ENCODE measurements at regions of chr2 and their contacts with region 1.

Region 1: DNA sequence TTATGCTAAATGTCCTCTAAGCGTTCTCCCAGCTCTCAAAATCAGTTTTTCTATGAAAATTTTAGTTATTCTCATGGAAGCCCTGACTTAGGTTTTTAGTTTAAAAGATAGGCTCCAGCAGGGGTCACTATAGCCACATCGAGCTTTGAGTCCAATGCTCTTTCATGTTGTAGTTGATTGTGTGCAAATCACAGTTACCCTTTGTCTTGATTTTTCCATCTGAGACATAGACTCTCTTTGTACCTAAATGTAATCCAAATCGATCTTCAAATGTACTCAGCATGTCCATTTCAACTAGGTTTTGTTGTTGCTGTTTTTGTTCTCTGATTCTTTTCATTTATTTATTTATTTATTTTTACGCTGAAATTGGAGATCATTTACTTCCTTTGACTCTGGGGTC is 26.4 kb upstream of the MSTN start:
- DNase-seq: peak in 7 of 9 donors; percentile 23 to 65 (median 54)
- ATAC-seq: peak; percentile 64
- H3K4me3 ChIP-seq: no peak overlapping the region
- H3K4me3 Mint-ChIP-seq: no peak overlapping the region
- H3K27ac ChIP-seq: no peak overlapping the region
- H3K27ac Mint-ChIP-seq: no peak overlapping the region
- H3K4me1 ChIP-seq: no peaks in the 10 kb centered on the region
- H3K4me1 Mint-ChIP-seq: no peaks in the 10 kb centered on the region
- H3K27me3 ChIP-seq: no peaks in the 10 kb centered on the region
- H3K27me3 Mint-ChIP-seq: peaks cover 0 to 4% (median 0%) of the 10 kb centered on the region in 5 donors

Region 2: DNA sequence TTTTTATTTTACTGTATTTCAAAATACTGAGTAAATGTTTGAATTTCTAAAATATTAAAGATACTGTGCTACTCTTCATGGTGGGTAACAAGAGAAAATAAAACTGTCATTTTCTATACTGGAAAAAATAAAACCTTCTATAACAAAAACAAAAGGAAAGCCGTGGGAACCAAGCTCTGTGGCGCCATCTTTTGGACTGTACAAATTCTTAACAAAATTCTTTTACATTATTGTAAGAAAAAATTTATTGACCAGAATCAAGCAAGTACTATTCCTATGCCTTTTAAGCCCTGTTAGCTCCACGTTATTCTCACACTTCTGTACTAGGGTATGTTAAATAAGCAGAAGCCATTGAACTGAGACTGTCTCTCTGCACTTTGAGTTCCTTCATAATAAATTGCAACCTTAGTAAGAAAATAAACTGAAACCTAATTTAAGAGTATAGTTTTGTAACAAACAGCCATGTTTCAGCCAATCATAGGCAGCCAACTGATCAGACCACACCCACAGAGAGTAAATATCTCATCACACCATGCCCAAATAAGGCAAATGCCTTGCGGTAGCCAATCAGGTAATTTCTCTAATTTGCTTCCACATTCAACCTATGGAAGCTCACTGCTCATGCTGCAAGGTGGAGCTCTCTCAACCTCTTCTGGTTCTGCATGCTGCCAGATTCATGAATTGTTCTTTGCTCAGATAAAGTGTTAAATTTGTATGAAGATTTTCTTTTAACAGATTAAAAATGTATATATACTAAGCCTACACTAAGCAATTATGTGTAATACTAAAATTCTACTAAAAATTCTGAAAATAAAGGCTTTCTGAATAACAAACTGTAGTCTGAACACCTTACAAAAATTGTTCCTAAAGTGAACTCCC is 188.6 kb after region 1 on chr2:
- CTCF ChIA-PET with region 1: no interaction called
- POLR2A ChIA-PET with region 1: no interaction called
- intact Hi-C with region 1: loop called (anchors 1 kb)
- DNase-seq: peak in 4 of 9 donors; percentile 5 to 18 (median 7)
- ATAC-seq: peak; percentile 45
- H3K4me3 ChIP-seq: no peak overlapping the region
- H3K4me3 Mint-ChIP-seq: no peak overlapping the region
- H3K27ac ChIP-seq: no peak overlapping the region
- H3K27ac Mint-ChIP-seq: no peak overlapping the region
- H3K4me1 ChIP-seq: no peaks in the 10 kb centered on the region
- H3K4me1 Mint-ChIP-seq: peaks cover 0 to 10% (median 0%) of the 10 kb centered on the region in 7 donors
- H3K27me3 ChIP-seq: no peaks in the 10 kb centered on the region
- H3K27me3 Mint-ChIP-seq: no peaks in the 10 kb centered on the region

Region 3: DNA sequence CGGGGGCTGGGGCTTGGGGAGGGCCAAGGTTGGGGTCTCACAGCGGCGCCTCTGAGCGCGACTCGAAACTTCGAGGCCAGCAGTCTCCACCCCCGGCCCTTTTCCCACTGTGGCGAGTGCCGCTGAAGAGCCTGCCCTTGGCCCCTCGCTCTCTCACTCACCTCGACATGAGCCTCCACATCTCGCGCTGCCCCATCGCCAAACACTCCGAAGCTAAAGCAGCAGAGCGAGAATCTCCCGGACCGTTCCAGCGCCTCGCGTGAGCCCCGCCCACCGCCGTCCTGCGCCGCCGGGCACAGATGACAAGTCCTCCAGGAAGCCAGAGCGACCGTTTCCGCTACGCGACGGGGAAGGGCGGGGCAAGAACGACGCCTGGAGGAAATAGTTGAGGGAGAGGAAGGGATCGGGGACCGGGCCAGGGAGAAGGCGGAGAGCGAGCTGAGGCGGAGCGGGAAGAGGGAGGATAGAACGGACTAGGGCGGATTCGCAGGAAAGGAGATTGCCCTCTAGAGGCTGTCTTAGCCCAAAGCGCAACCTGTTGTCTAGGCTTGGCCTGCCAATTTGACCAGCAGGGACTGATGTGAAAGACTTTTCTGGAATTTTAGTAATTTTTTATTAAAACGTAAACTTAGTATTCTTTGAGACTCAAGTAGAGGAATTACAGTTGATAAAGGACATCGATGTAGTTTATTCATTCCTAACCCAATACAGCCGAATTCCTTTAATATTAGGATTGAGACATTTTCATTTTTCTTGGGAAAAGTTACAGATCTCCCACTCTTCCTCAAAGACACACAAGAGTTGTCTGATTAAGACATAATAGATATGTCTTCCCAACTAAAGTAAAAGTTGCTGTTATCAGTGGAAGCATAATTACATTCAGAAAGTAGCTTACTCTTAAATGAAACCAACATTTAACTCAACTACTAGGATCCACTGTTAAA is 230.9 kb after region 1 on chr2 and contains the start of gene HIBCH:
- CTCF ChIA-PET with region 1: no interaction called
- POLR2A ChIA-PET with region 1: no interaction called
- intact Hi-C with region 1: loop called in 1 of 2 experiments (anchors 1 kb)
- DNase-seq: peak; percentile 56 to 88 (median 68)
- ATAC-seq: peak; percentile 94
- H3K4me3 ChIP-seq: peak within 1 kb of the TSS; percentile 83
- H3K4me3 Mint-ChIP-seq: peak within 1 kb of the TSS; percentile 85 to 100 (median 97)
- H3K27ac ChIP-seq: peak within 1 kb of the TSS; percentile 82
- H3K27ac Mint-ChIP-seq: peak within 1 kb of the TSS; percentile 91 to 99 (median 95)
- H3K4me1 ChIP-seq: peaks cover 8 to 13% of the 10 kb centered on the region in 2 donors
- H3K4me1 Mint-ChIP-seq: peaks cover 27 to 54% (median 48%) of the 10 kb centered on the region in 7 donors
- H3K27me3 ChIP-seq: no peaks in the 10 kb centered on the region
- H3K27me3 Mint-ChIP-seq: no peaks in the 10 kb centered on the region
- total RNA-seq, gene HIBCH: 11.3 to 25.0 (median 21.6) TPM

Region 4: DNA sequence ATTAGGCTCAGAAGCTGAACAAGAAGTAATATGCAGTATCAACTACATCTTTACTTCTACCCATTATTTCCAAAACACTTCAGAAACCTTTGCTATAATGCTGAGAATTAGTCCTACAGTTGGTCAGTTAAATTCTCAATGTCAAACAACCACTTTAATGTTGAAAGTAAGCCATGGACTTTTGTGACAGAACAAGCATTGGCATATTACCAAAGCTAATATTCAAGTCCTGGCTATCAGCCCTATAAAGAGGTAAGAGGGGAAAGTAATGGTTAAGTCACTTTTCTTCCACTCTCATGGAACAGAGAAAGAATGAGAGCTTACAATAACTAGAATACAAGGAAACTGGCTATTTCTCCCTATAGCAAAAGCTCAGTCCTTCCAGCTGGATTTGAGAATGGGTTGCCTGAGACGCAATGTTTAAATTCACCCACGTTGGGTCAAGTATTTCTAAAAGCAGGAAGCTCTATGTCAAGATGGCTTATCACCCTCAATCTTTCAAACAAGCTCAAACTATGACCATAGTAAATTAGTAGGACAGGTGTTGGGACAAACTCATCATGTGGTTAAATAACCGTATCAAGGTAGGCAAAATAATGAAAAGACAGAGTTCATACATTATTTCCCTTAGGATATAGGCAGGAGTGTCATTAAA is 287.8 kb after region 1 on chr2:
- CTCF ChIA-PET with region 1: interaction called, 3 read pairs
- POLR2A ChIA-PET with region 1: no interaction called
- intact Hi-C with region 1: loop called (anchors 1 kb)
- DNase-seq: no peak
- ATAC-seq: no peak
- H3K4me3 ChIP-seq: no peak overlapping the region
- H3K4me3 Mint-ChIP-seq: no peak overlapping the region
- H3K27ac ChIP-seq: no peak overlapping the region
- H3K27ac Mint-ChIP-seq: no peak overlapping the region
- H3K4me1 ChIP-seq: no peaks in the 10 kb centered on the region
- H3K4me1 Mint-ChIP-seq: peaks cover 0 to 5% (median 0%) of the 10 kb centered on the region in 7 donors
- H3K27me3 ChIP-seq: no peaks in the 10 kb centered on the region
- H3K27me3 Mint-ChIP-seq: peaks cover 0 to 3% (median 0%) of the 10 kb centered on the region in 5 donors

Region 5: DNA sequence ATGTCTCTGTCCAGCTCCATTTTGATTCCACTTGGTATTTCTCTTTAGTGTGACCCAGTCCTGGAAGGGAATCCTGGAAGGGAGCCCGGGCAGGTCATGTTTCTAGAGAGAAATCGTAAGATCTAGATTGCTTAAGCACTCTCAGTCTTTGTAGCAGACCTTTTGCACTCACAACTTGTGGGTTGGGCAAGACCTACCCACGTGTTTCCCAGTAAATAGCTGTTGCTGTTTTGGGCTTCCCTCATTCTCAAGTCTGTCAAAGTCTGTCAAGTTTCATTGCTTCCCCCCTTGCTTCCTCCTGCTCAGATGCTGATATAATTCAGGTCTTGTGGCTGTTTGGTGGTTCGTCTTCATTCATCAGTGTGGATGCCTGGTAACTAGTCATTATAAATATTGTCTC is 463.0 kb after region 1 on chr2:
- CTCF ChIA-PET with region 1: interaction called, 4 read pairs
- POLR2A ChIA-PET with region 1: no interaction called
- intact Hi-C with region 1: loop called in 1 of 2 experiments (anchors 5 kb)
- DNase-seq: peak in 2 of 9 donors; percentile 19 to 37
- ATAC-seq: peak; percentile 93
- H3K4me3 ChIP-seq: no peak overlapping the region
- H3K4me3 Mint-ChIP-seq: peak overlapping the region in 7 of 10 donors; percentile 5 to 73 (median 21)
- H3K27ac ChIP-seq: no peak overlapping the region
- H3K27ac Mint-ChIP-seq: peak overlapping the region in 6 of 9 donors; percentile 38 to 90 (median 61)
- H3K4me1 ChIP-seq: no peaks in the 10 kb centered on the region
- H3K4me1 Mint-ChIP-seq: peaks cover 9 to 11% (median 10%) of the 10 kb centered on the region in 7 donors
- H3K27me3 ChIP-seq: no peaks in the 10 kb centered on the region
- H3K27me3 Mint-ChIP-seq: no peaks in the 10 kb centered on the region

Region 6: GRCh38 chr2:190804182-190804795 is 715.4 kb after region 1 on chr2:
- CTCF ChIA-PET with region 1: no interaction called
- POLR2A ChIA-PET with region 1: no interaction called
- intact Hi-C with region 1: loop called (anchors 1 to 10 kb)
- DNase-seq: peak in 5 of 9 donors; percentile 6 to 19 (median 13)
- ATAC-seq: no peak
- H3K4me3 ChIP-seq: no peak overlapping the region
- H3K4me3 Mint-ChIP-seq: no peak overlapping the region
- H3K27ac ChIP-seq: no peak overlapping the region
- H3K27ac Mint-ChIP-seq: no peak overlapping the region
- H3K4me1 ChIP-seq: no peaks in the 10 kb centered on the region
- H3K4me1 Mint-ChIP-seq: peaks cover 0 to 9% (median 0%) of the 10 kb centered on the region in 7 donors
- H3K27me3 ChIP-seq: no peaks in the 10 kb centered on the region
- H3K27me3 Mint-ChIP-seq: no peaks in the 10 kb centered on the region

Measured in naive thymus-derived CD4-positive, alpha-beta T cell (primary cell).